ENCODE measurements at regions of chr20 and their contacts with region 1.

Region 1: GRCh38 chr20:52127309-52127708 is 64.3 kb downstream of the ZFP64 start:
- DNase-seq: no peak
- ATAC-seq: no peak
- H3K4me3 ChIP-seq: no peak overlapping the region
- H3K27ac ChIP-seq: no peak overlapping the region
- H3K4me1 ChIP-seq: no peaks in the 10 kb centered on the region
- H3K27me3 ChIP-seq: no peaks in the 10 kb centered on the region
- CTCF ChIP-seq: no peak
- EP300 ChIP-seq: no peak
- POLR2A ChIP-seq: no peak
- RAD21 ChIP-seq: no peak

Region 2: GRCh38 chr20:52139986-52140385 is 12.7 kb after region 1 on chr20:
- CTCF ChIA-PET with region 1: interaction called, 12 read pairs
- POLR2A ChIA-PET with region 1: no interaction called
- RAD21 ChIA-PET with region 1: interaction called, 4 read pairs
- SMC1A ChIA-PET with region 1: no interaction called
- in situ Hi-C with region 1: no loop called
- intact Hi-C with region 1: no loop called
- DNase-seq: no peak
- ATAC-seq: no peak
- H3K4me3 ChIP-seq: no peak overlapping the region
- H3K27ac ChIP-seq: no peak overlapping the region
- H3K4me1 ChIP-seq: no peaks in the 10 kb centered on the region
- H3K27me3 ChIP-seq: no peaks in the 10 kb centered on the region
- CTCF ChIP-seq: no peak
- EP300 ChIP-seq: no peak
- POLR2A ChIP-seq: no peak
- RAD21 ChIP-seq: no peak

Region 3: GRCh38 chr20:52150440-52151258 is 23.3 kb after region 1 on chr20:
- CTCF ChIA-PET with region 1: interaction called, 35 read pairs
- POLR2A ChIA-PET with region 1: no interaction called
- RAD21 ChIA-PET with region 1: interaction called, 6 read pairs
- SMC1A ChIA-PET with region 1: interaction called, 7 read pairs
- in situ Hi-C with region 1: no loop called
- intact Hi-C with region 1: loop called (anchors 2 kb)
- DNase-seq: peak; percentile 24
- ATAC-seq: peak; percentile 78
- H3K4me3 ChIP-seq: no peak overlapping the region
- H3K27ac ChIP-seq: no peak overlapping the region
- H3K4me1 ChIP-seq: no peaks in the 10 kb centered on the region
- H3K27me3 ChIP-seq: no peaks in the 10 kb centered on the region
- CTCF ChIP-seq: peak; percentile 74 to 82 (median 76)
- EP300 ChIP-seq: no peak
- POLR2A ChIP-seq: no peak
- RAD21 ChIP-seq: peak; percentile 71

Region 4: GRCh38 chr20:52200870-52201269 is 73.6 kb after region 1 on chr20:
- CTCF ChIA-PET with region 1: interaction called, 19 read pairs
- POLR2A ChIA-PET with region 1: interaction called, 3 read pairs
- RAD21 ChIA-PET with region 1: interaction called, 11 read pairs
- SMC1A ChIA-PET with region 1: interaction called, 7 read pairs
- in situ Hi-C with region 1: no loop called
- intact Hi-C with region 1: no loop called
- DNase-seq: no peak
- ATAC-seq: no peak
- H3K4me3 ChIP-seq: no peak overlapping the region
- H3K27ac ChIP-seq: no peak overlapping the region
- H3K4me1 ChIP-seq: no peaks in the 10 kb centered on the region
- H3K27me3 ChIP-seq: no peaks in the 10 kb centered on the region
- CTCF ChIP-seq: no peak
- EP300 ChIP-seq: no peak
- POLR2A ChIP-seq: no peak
- RAD21 ChIP-seq: no peak

Region 5: GRCh38 chr20:52219441-52219840 is 92.1 kb after region 1 on chr20:
- CTCF ChIA-PET with region 1: interaction called, 14 read pairs
- POLR2A ChIA-PET with region 1: no interaction called
- RAD21 ChIA-PET with region 1: interaction called, 7 read pairs
- SMC1A ChIA-PET with region 1: interaction called, 4 read pairs
- in situ Hi-C with region 1: no loop called
- intact Hi-C with region 1: no loop called
- DNase-seq: no peak
- ATAC-seq: no peak
- H3K4me3 ChIP-seq: no peak overlapping the region
- H3K27ac ChIP-seq: no peak overlapping the region
- H3K4me1 ChIP-seq: no peaks in the 10 kb centered on the region
- H3K27me3 ChIP-seq: no peaks in the 10 kb centered on the region
- CTCF ChIP-seq: peak in 1 of 3 experiments; percentile 20; a peak in 1 of 6 replicates
- EP300 ChIP-seq: no peak
- POLR2A ChIP-seq: no peak
- RAD21 ChIP-seq: peak; percentile 33

Region 6: GRCh38 chr20:52312132-52312729 is 184.9 kb after region 1 on chr20:
- CTCF ChIA-PET with region 1: interaction called, 17 read pairs
- POLR2A ChIA-PET with region 1: no interaction called
- RAD21 ChIA-PET with region 1: interaction called, 8 read pairs
- SMC1A ChIA-PET with region 1: interaction called, 3 read pairs
- in situ Hi-C with region 1: no loop called
- intact Hi-C with region 1: no loop called
- DNase-seq: peak; percentile 7
- ATAC-seq: peak; percentile 74
- H3K4me3 ChIP-seq: no peak overlapping the region
- H3K27ac ChIP-seq: no peak overlapping the region
- H3K4me1 ChIP-seq: no peaks in the 10 kb centered on the region
- H3K27me3 ChIP-seq: no peaks in the 10 kb centered on the region
- CTCF ChIP-seq: peak; percentile 68 to 75 (median 69)
- EP300 ChIP-seq: no peak
- POLR2A ChIP-seq: no peak
- RAD21 ChIP-seq: peak; percentile 76